PC-3 (cell line): ENCODE measurements at regions of chr6 and their contacts with region 1.

Region 1: GRCh38 chr6:31087494-31088089 is 24.8 kb downstream of the C6orf15 start:
- DNase-seq: peak; percentile 97
- ATAC-seq: peak; percentile 95
- H3K4me3 ChIP-seq: peak overlapping the region; percentile 64
- H3K27ac ChIP-seq: peak overlapping the region; percentile 31
- H3K4me1 ChIP-seq: peaks cover 11% of the 10 kb centered on the region
- H3K27me3 ChIP-seq: no peaks in the 10 kb centered on the region
- CTCF ChIP-seq: peak; percentile 87

Region 2: DNA sequence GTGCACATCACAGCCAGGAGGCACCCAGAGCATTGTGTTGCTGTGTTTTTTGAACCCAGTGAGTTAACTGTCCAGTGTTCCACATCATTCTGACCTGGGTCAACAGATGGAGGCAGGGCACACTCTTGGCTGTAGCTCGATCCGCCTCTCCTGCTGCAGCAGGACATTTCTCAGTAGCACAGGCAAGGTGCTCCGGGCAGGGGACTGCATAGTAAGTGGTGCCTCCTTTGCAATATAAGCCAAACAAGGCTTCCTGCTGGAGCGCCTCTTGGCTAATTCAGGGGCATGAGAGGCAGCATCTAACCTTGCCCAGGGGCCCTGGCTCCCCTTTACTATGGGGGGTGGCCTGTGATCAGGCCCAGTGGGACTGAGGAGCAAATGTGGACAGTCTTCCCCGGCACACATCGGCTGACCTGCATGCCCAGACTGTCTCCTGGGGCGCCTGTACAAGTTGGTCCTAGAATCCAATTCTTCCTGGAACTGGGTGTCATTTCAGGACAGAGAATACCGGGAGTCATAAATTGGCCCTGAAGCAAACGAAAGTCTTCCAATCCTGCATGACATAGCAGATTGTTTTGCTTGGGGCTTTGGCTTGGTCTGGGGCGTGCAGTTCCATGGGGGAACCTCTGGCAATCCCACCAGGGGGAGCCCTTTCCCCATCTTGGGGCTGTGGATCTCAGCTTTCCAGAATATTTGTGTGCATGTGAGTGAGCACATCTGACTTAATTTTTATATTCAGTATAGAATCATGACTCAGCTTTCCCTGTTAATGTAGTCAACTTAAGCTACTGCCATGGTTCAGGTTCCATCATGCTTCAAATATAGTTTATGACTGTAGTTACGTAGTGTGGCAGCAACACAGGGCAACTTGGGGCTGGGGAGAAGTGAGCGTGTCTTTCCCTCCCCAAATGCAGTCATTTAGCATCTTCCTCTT is 259.3 kb before region 1 on chr6:
- CTCF ChIA-PET with region 1: interaction called, 6 read pairs
- POLR2A ChIA-PET with region 1: interaction called, 3 read pairs
- intact Hi-C with region 1: loop called (anchors 1 kb)
- DNase-seq: peak; percentile 94
- ATAC-seq: peak; percentile 91
- H3K4me3 ChIP-seq: no peak overlapping the region
- H3K27ac ChIP-seq: peak overlapping the region; percentile 80
- H3K4me1 ChIP-seq: peaks cover 36% of the 10 kb centered on the region
- H3K27me3 ChIP-seq: no peaks in the 10 kb centered on the region
- CTCF ChIP-seq: peak; percentile 95

Region 3: GRCh38 chr6:30942338-30943060 is 145.1 kb before region 1 on chr6:
- CTCF ChIA-PET with region 1: interaction called, 10 read pairs
- POLR2A ChIA-PET with region 1: no interaction called
- intact Hi-C with region 1: no loop called
- DNase-seq: peak; percentile 96
- ATAC-seq: peak; percentile 94
- H3K4me3 ChIP-seq: no peak overlapping the region
- H3K27ac ChIP-seq: no peak overlapping the region
- H3K4me1 ChIP-seq: peaks cover 9% of the 10 kb centered on the region; the same call in 1 of the 2 replicates
- H3K27me3 ChIP-seq: no peaks in the 10 kb centered on the region
- CTCF ChIP-seq: peak; percentile 80

Region 4: GRCh38 chr6:31114970-31115849 is 27.6 kb after region 1 on chr6:
- CTCF ChIA-PET with region 1: interaction called, 20 read pairs
- POLR2A ChIA-PET with region 1: interaction called, 4 read pairs
- intact Hi-C with region 1: no loop called
- DNase-seq: peak; percentile 72
- ATAC-seq: peak; percentile 67
- H3K4me3 ChIP-seq: peak overlapping the region; percentile 62
- H3K27ac ChIP-seq: peak overlapping the region; percentile 90
- H3K4me1 ChIP-seq: peaks cover 36% of the 10 kb centered on the region
- H3K27me3 ChIP-seq: no peaks in the 10 kb centered on the region
- CTCF ChIP-seq: peak; percentile 64